Ascending aorta (tissue), 2 donors: ENCODE measurements at regions of chr10 and their contacts with region 1.

Region 1: GRCh38 chr10:114876602-114877300 is 55.2 kb downstream of the FHIP2A start:
- DNase-seq: peak in 1 of 2 donors; percentile 79
- H3K4me3 ChIP-seq: no peak overlapping the region
- H3K27ac ChIP-seq: no peak overlapping the region
- H3K4me1 ChIP-seq: no peaks in the 10 kb centered on the region
- H3K27me3 ChIP-seq: no peaks in the 10 kb centered on the region
- CTCF ChIP-seq: peak; percentile 47 to 83 (median 74)

Region 2: DNA sequence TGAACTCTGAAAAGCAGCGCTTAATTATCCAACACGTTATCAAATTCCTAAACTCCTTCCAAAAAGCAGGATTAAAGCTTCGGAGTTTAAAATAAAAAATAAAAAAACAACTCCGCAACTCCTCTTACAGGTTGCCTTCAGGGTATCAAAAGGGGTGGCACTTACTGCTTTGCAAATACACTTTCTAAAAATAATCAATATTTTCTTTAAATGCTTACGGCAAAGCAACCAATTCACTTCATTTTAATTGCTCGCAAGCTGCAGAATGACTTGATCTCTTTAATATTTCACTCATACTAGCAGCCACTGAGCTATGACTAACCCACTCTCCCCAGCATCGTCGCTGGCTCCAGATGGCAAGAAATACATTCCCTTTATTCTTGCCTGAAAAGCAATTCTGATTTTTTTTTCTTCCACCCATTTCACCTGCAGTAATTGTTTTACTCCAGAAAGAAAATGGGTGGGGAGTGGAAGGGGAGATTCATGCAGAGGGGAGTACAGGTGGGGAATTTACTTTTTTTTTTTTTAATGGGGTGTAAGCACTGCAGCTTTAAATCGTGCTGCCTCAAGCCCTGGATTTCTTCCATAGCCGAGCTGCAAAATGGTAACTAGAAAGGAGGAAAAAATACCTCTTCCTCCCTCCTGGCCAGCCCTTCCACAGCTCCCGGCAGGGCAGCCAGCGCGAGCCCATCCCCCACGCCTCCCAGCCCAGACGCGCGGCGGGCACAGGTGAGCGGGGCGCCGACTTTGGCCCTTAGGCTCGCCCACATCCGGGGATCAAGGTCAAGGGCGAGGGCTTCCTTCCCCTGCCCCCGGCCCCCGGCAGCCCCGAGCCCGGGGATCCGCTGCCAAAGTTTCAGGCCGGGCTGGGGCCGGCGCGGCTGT is 109.4 kb before region 1 on chr10:
- intact Hi-C with region 1: no loop called
- DNase-seq: no peak
- H3K4me3 ChIP-seq: peak overlapping the region; percentile 83 to 84
- H3K27ac ChIP-seq: peak overlapping the region; percentile 48 to 49
- H3K4me1 ChIP-seq: peaks cover 4 to 8% of the 10 kb centered on the region in 2 donors
- H3K27me3 ChIP-seq: no peaks in the 10 kb centered on the region
- CTCF ChIP-seq: no peak

Region 3: GRCh38 chr10:115129752-115130151 is 253.0 kb after region 1 on chr10:
- intact Hi-C with region 1: loop called (anchors 1 kb)
- DNase-seq: no peak
- H3K4me3 ChIP-seq: no peak overlapping the region
- H3K27ac ChIP-seq: no peak overlapping the region
- H3K4me1 ChIP-seq: no peaks in the 10 kb centered on the region
- H3K27me3 ChIP-seq: no peaks in the 10 kb centered on the region
- CTCF ChIP-seq: peak; percentile 30 to 54 (median 42)